Adrenal gland (tissue), 19 donors: ENCODE measurements at regions of chr14 and their contacts with region 1.

Region 1: DNA sequence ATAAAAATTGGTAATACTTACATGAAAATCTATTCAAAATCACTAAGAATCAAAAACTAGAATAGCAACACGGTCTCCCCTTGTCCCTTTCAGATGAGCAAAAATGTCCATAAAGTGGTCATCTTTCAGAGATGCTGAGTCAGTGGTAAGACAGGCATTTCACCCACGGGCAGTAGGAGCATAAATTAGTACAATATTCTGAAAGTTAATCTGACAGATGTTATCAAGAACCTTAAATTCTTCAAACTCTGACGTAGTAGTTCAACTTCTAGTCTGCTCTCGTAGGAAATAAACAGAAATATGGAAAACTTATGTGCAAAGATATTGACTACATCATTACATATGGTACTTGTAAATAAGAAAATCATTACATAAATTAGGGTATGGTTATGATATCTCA is 33.1 kb upstream of the GNPNAT1 start:
- DNase-seq: no peak
- H3K4me3 ChIP-seq: no peak overlapping the region
- H3K27ac ChIP-seq: no peak overlapping the region
- H3K4me1 ChIP-seq: peaks cover 0 to 5% of the 10 kb centered on the region in 2 donors
- H3K27me3 ChIP-seq: no peaks in the 10 kb centered on the region
- CTCF ChIP-seq: no peak
- POLR2A ChIP-seq: no peak

Region 2: GRCh38 chr14:52950898-52951689 is 126.6 kb after region 1 on chr14 and contains the start of gene FERMT2:
- intact Hi-C with region 1: loop called in 1 of 2 experiments (anchors 5 kb)
- DNase-seq: peak; percentile 85 to 92 (median 89)
- H3K4me3 ChIP-seq: peak within 1 kb of the TSS; percentile 52 to 85 (median 80)
- H3K27ac ChIP-seq: peak within 1 kb of the TSS; percentile 71 to 96 (median 91)
- H3K4me1 ChIP-seq: peaks cover 3 to 25% of the 10 kb centered on the region in 2 donors
- H3K27me3 ChIP-seq: no peaks in the 10 kb centered on the region
- CTCF ChIP-seq: no peak
- POLR2A ChIP-seq: peak; percentile 61 to 77
- total RNA-seq, gene FERMT2: 31.1 to 53.8 (median 41.2) TPM

Region 3: GRCh38 chr14:52961060-52961639 is 136.6 kb after region 1 on chr14:
- intact Hi-C with region 1: loop called (anchors 5 kb)
- DNase-seq: peak; percentile 44 to 86 (median 65)
- H3K4me3 ChIP-seq: no peak overlapping the region
- H3K27ac ChIP-seq: peak overlapping the region in 1 of 5 donors; percentile 42
- H3K4me1 ChIP-seq: no peaks in the 10 kb centered on the region
- H3K27me3 ChIP-seq: no peaks in the 10 kb centered on the region
- CTCF ChIP-seq: peak; percentile 43 to 86 (median 77)
- POLR2A ChIP-seq: no peak

Region 4: DNA sequence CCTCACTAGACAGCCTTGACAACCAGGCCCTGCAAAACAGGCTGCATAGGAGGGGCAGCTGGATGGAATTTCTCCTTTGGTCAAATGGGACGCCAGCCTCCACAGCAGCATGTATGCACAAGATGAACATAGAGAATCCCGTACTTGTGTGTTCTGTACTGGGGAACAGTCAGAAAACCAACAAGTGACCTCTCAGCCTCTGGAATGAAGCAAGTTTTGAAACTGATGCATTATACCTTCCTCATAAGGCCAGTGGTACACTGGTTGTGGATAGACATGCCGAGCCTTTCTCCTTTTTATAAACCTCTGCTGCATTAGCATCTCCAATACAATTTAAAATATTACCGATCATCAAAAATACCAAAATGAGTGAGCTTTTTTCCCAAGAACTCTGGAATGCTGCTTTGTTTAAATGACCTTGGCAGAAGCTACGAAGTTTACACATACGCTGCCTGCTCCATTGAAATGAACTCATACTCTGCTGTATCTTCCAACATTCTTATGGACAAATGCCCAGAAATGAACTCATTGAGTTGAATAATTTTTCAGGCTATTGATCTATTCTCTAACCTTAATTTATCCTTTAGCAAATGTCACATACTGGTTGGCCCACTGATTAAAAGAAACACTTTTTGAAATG is 174.0 kb after region 1 on chr14:
- intact Hi-C with region 1: no loop called
- DNase-seq: peak in 2 of 7 donors; percentile 16 to 23
- H3K4me3 ChIP-seq: no peak overlapping the region
- H3K27ac ChIP-seq: peak overlapping the region in 1 of 5 donors; percentile 29
- H3K4me1 ChIP-seq: no peaks in the 10 kb centered on the region
- H3K27me3 ChIP-seq: no peaks in the 10 kb centered on the region
- CTCF ChIP-seq: no peak
- POLR2A ChIP-seq: no peak

Region 5: DNA sequence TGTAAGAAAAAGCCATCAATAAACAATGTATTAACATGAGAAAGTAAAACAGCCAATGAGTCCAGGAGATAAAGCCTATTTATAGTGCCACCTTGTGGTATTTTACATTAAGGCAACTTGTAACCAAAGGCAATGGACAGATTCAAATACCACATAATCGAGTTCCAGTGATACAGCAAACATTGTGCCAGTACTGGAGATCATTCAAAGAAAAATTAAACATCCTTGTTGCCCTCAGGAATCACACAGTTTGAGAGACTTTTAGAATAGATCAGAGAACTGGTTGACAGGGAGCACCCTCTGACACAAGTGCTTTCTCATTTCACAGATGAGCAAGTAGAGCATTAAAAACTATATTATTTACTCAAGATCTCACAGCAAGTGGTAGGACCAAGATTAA is 230.5 kb after region 1 on chr14:
- intact Hi-C with region 1: loop called in 1 of 2 experiments (anchors 10 kb)
- DNase-seq: no peak
- H3K4me3 ChIP-seq: no peak overlapping the region
- H3K27ac ChIP-seq: no peak overlapping the region
- H3K4me1 ChIP-seq: no peaks in the 10 kb centered on the region
- H3K27me3 ChIP-seq: no peaks in the 10 kb centered on the region
- CTCF ChIP-seq: peak; percentile 45 to 80 (median 68)
- POLR2A ChIP-seq: no peak

Region 6: DNA sequence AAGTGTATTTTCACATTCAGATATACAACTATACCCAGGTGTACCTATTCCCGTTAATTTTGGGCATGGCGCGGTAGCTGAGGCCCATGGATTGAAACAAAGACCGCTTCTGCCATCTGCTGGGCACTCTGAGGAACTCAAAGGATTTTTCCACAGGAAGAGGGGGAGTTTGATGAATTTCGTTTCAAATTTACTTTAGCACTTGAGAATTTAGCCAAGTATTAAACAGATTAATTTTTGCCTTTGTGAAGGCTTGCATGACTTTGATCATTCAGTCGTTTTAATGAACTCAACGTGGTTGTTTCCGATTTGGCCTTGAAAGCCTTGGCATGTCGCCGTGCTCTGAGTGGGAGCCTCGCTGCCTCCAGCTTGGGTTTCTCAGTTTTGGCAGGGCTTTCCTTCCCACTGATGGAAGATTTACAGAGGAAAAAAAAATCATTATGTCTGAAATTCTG is 481.8 kb after region 1 on chr14:
- intact Hi-C with region 1: loop called in 1 of 2 experiments (anchors 10 kb)
- DNase-seq: peak; percentile 68 to 84 (median 75)
- H3K4me3 ChIP-seq: peak overlapping the region in 2 of 4 donors; percentile 1 to 51
- H3K27ac ChIP-seq: peak overlapping the region in 4 of 5 donors; percentile 44 to 83 (median 60)
- H3K4me1 ChIP-seq: peaks cover 6% of the 10 kb centered on the region in 2 donors
- H3K27me3 ChIP-seq: no peaks in the 10 kb centered on the region
- CTCF ChIP-seq: peak; percentile 69 to 95 (median 88)
- POLR2A ChIP-seq: no peak